Motor neuron (in vitro differentiated cells): ENCODE measurements at regions of chr11 and their contacts with region 1.

Region 1: GRCh38 chr11:125777309-125777708 is 1.3 kb downstream of the PATE2 start:
- ATAC-seq: peak in 4 of 8 experiments; percentile 59 to 87 (median 66)
- H3K4me3 ChIP-seq: no peak overlapping the region
- H3K27ac ChIP-seq: no peak overlapping the region
- H3K4me1 ChIP-seq: no peaks in the 10 kb centered on the region

Region 2: GRCh38 chr11:124970925-124971324 is 806.4 kb before region 1 on chr11:
- in situ Hi-C with region 1: no loop called
- ATAC-seq: peak in 3 of 8 experiments; percentile 67 to 90 (median 72)
- H3K4me3 ChIP-seq: no peak overlapping the region
- H3K27ac ChIP-seq: no peak overlapping the region
- H3K4me1 ChIP-seq: no peaks in the 10 kb centered on the region

Region 3: GRCh38 chr11:125679397-125679796 is 97.9 kb before region 1 on chr11:
- in situ Hi-C with region 1: loop called in 1 of 9 experiments (anchors 25 kb)
- ATAC-seq: no peak
- H3K4me3 ChIP-seq: no peak overlapping the region
- H3K27ac ChIP-seq: no peak overlapping the region
- H3K4me1 ChIP-seq: no peaks in the 10 kb centered on the region

Region 4: GRCh38 chr11:126101251-126101929 is 324.1 kb after region 1 on chr11:
- in situ Hi-C with region 1: no loop called
- ATAC-seq: no peak
- H3K4me3 ChIP-seq: no peak overlapping the region
- H3K27ac ChIP-seq: no peak overlapping the region
- H3K4me1 ChIP-seq: peaks cover 0 to 5% of the 10 kb centered on the region in 2 donors